Posterior vena cava (tissue), 2 donors: ENCODE measurements at regions of chr7 and their contacts with region 1.

Region 1: DNA sequence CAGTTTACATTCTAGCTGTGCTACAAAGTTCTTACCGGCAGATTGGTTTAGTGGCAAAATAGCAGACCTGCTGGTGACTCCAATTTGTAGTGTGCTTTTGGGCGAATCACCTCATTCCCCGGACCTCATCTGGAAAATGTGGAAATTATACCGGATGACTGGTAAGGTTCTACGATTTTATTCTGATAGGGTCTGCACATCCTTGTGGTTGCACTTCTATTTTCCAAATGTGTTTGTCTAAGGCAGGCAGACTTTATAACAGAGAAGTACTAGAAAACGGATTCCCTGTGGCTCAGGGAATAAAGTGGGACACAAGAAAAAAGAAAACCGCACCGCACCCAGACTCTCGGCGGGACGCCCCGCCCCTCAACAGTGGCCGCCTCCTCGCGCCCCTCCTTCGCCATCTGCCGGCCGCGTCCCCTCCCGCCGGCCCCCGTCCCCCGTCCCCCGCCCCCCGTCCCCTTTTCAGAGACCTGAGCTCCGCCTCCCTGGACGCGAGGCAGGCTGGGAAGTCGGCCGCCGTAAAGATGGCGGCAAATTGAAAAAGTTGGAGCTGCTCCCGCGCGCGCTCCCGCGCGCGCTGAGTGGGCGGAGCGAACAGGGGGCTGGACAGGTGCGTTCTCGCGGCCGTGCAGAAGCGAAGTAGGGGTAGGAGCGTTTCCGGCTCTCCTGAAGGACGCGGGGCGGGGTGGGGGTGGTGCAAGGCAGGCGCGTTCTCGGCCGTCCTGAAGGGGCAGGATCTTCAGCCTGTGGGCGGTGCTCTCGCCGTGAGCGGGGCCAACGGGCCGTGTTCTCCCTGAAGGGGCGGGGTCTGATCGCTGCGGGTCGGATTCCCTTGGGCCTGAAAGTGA is 531 bp upstream of the CCM2 start:
- DNase-seq: peak; percentile 100

Region 2: DNA sequence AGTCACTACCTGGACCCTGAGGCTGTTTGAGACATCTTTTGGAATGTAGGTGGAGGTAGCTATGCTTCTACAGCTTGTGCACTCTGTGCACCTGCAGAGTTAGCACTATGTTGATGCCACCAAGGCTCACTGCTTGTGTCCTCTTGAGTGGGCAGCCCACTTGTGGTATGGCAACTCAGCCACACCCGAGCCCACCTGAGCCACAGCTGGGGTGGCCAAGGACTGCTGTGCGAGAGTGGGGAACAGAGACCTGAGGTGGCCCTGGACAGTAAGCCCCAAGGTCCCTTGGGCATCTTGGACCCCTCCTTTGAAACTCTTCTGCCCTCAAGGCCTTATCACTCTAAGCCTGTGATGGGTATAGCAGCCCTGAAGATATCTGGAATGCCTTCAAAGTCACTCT is 46.3 kb before region 1 on chr7:
- intact Hi-C with region 1: no loop called
- DNase-seq: peak; percentile 28

Region 3: GRCh38 chr7:45111298-45112223 is 112.1 kb after region 1 on chr7 and contains the start of gene TBRG4:
- intact Hi-C with region 1: loop called in 1 of 2 experiments (anchors 10 kb)
- DNase-seq: peak; percentile 99
- total RNA-seq, gene TBRG4: 32.5 to 35.1 TPM